ENCODE measurements at regions of chr20 and their contacts with region 1.

Region 1: GRCh38 chr20:55449091-55449794 is 556.1 kb downstream of the CBLN4 start:
- DNase-seq: peak in 1 of 3 donors; percentile 35
- ATAC-seq: no peak
- H3K4me3 ChIP-seq: no peak overlapping the region
- H3K27ac ChIP-seq: no peak overlapping the region
- H3K4me1 ChIP-seq: no peaks in the 10 kb centered on the region
- H3K27me3 ChIP-seq: no peaks in the 10 kb centered on the region

Region 2: GRCh38 chr20:54961967-54962366 is 487.3 kb before region 1 on chr20:
- intact Hi-C with region 1: no loop called
- DNase-seq: no peak
- ATAC-seq: no peak
- H3K4me3 ChIP-seq: no peak overlapping the region
- H3K27ac ChIP-seq: no peak overlapping the region
- H3K4me1 ChIP-seq: no peaks in the 10 kb centered on the region
- H3K27me3 ChIP-seq: no peaks in the 10 kb centered on the region

Region 3: GRCh38 chr20:55500130-55500529 is 50.9 kb after region 1 on chr20:
- intact Hi-C with region 1: loop called in 1 of 4 experiments (anchors 10 kb)
- DNase-seq: no peak
- ATAC-seq: no peak
- H3K4me3 ChIP-seq: no peak overlapping the region
- H3K27ac ChIP-seq: no peak overlapping the region
- H3K4me1 ChIP-seq: no peaks in the 10 kb centered on the region
- H3K27me3 ChIP-seq: no peaks in the 10 kb centered on the region